ENCODE measurements at regions of chr11 and their contacts with region 1.

Region 1: GRCh38 chr11:61384271-61385242 is 7.8 kb upstream of the TMEM216 start:
- DNase-seq: no peak
- ATAC-seq: peak; percentile 63
- H3K4me3 ChIP-seq: no peak overlapping the region
- H3K27ac ChIP-seq: no peak overlapping the region
- H3K4me1 ChIP-seq: no peaks in the 10 kb centered on the region
- H3K27me3 ChIP-seq: no peaks in the 10 kb centered on the region
- CTCF ChIP-seq: peak; percentile 24 to 55 (median 48); a peak in 5 of 6 replicates
- EP300 ChIP-seq: no peak
- POLR2A ChIP-seq: no peak
- RAD21 ChIP-seq: peak; percentile 60

Region 2: DNA sequence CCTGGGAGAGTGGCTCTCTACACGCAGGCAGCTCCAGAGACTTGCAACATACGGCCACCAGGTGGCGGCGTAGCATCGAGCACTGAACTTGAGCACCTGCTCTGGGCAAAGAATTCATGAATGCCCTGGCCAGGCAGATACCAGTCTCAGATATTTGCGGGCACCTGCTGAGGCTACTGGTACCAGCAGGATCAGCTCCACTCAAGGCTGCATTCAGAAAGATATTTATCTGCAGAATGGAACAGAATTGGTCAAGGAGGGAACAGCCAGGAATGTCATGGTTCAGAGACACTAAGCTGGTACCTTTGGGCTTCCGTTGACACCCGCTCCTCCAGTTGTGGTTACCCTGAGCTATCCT is 553.4 kb before region 1 on chr11:
- CTCF ChIA-PET with region 1: interaction called, 11 read pairs
- POLR2A ChIA-PET with region 1: no interaction called
- RAD21 ChIA-PET with region 1: interaction called, 8 read pairs
- SMC1A ChIA-PET with region 1: interaction called, 7 read pairs
- in situ Hi-C with region 1: no loop called
- intact Hi-C with region 1: no loop called
- DNase-seq: peak; percentile 26
- ATAC-seq: peak; percentile 98
- H3K4me3 ChIP-seq: no peak overlapping the region
- H3K27ac ChIP-seq: no peak overlapping the region
- H3K4me1 ChIP-seq: no peaks in the 10 kb centered on the region; the same call in 1 of the 2 replicates
- H3K27me3 ChIP-seq: no peaks in the 10 kb centered on the region; a peak in 2 of 4 replicates
- CTCF ChIP-seq: peak; percentile 94 to 95 (median 95)
- EP300 ChIP-seq: no peak
- POLR2A ChIP-seq: no peak
- RAD21 ChIP-seq: peak; percentile 96

Region 3: GRCh38 chr11:61294717-61295595 is 89.6 kb before region 1 on chr11 and contains the start of gene VWCE:
- CTCF ChIA-PET with region 1: interaction called, 18 read pairs
- POLR2A ChIA-PET with region 1: no interaction called
- RAD21 ChIA-PET with region 1: interaction called, 5 read pairs
- SMC1A ChIA-PET with region 1: interaction called, 9 read pairs
- in situ Hi-C with region 1: no loop called
- intact Hi-C with region 1: no loop called
- DNase-seq: no peak
- ATAC-seq: peak; percentile 90
- H3K4me3 ChIP-seq: peak within 1 kb of the TSS; percentile 70
- H3K27ac ChIP-seq: peak within 1 kb of the TSS; percentile 67
- H3K4me1 ChIP-seq: peaks cover 28% of the 10 kb centered on the region
- H3K27me3 ChIP-seq: no peaks in the 10 kb centered on the region
- CTCF ChIP-seq: peak; percentile 44 to 57 (median 45); a peak in 5 of 6 replicates
- EP300 ChIP-seq: no peak
- POLR2A ChIP-seq: peak; percentile 68
- RAD21 ChIP-seq: peak; percentile 52
- polyA plus RNA-seq, gene VWCE: 0.10 to 0.29 TPM

Region 4: GRCh38 chr11:61332797-61333549 is 51.6 kb before region 1 on chr11 and contains the starts of genes DDB1 and TKFC:
- CTCF ChIA-PET with region 1: interaction called, 729 read pairs
- POLR2A ChIA-PET with region 1: interaction called, 86 read pairs
- RAD21 ChIA-PET with region 1: interaction called, 424 read pairs
- SMC1A ChIA-PET with region 1: interaction called, 414 read pairs
- in situ Hi-C with region 1: loop called (anchors 5 kb)
- intact Hi-C with region 1: loop called (anchors 1 kb)
- DNase-seq: peak; percentile 64
- ATAC-seq: peak; percentile 94
- H3K4me3 ChIP-seq: peak within 1 kb of the TSS; percentile 90
- H3K27ac ChIP-seq: peak within 1 kb of the TSS; percentile 92
- H3K4me1 ChIP-seq: peaks cover 20% of the 10 kb centered on the region
- H3K27me3 ChIP-seq: no peaks in the 10 kb centered on the region
- CTCF ChIP-seq: no peak
- EP300 ChIP-seq: no peak
- POLR2A ChIP-seq: peak; percentile 98
- RAD21 ChIP-seq: no peak
- polyA plus RNA-seq, gene DDB1: 136 to 211 TPM
- polyA plus RNA-seq, gene TKFC: 2.4 to 5.5 TPM

Region 5: DNA sequence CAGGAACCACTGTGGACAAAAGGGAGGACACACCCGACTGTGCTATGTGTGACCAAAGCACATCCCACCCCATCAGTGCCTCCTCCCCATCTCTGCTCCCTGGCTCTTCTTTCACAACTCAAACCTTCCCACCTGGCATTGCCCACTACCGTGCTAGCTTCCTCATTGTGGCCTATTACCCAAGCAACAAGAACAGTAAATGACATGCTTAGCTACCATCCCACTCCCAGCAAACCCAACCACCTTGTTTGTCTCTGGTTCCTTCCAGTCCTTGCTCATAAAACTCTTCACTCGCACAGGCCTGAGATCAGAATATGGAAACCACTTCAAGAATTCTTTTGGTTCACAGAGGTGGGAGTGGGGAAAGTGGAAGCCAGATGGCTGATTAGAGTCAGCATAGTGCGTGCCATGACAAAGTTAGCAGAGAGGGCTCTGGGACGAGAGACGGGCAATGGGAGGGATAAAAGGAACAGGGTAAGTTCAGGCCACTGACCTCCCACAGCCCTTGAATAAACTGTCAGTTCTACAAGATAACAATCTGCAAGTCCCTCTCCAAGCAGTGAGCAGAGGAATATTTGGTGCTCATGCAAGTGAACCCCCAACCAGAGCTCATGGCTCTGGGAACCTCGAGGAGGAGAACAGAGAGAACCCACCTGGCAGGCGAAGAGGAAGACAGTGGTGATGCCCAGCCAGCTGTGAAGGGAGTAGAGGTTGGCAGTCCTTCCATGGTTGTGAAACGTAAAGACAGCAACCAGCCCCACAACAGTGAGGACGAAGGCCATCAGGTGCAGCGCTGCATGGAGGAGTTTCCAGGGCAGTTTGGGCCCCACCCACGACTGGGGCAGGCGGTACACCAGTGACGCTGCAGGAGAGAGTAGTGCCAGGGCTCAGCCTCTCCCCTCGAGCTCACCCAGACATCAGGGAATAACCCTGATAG is 31.2 kb before region 1 on chr11:
- CTCF ChIA-PET with region 1: interaction called, 309 read pairs
- POLR2A ChIA-PET with region 1: interaction called, 7 read pairs
- RAD21 ChIA-PET with region 1: interaction called, 42 read pairs
- SMC1A ChIA-PET with region 1: interaction called, 122 read pairs
- in situ Hi-C with region 1: no loop called
- intact Hi-C with region 1: loop called (anchors 2 kb)
- DNase-seq: no peak
- ATAC-seq: no peak
- H3K4me3 ChIP-seq: no peak overlapping the region
- H3K27ac ChIP-seq: no peak overlapping the region
- H3K4me1 ChIP-seq: peaks cover 22% of the 10 kb centered on the region
- H3K27me3 ChIP-seq: no peaks in the 10 kb centered on the region
- CTCF ChIP-seq: no peak
- EP300 ChIP-seq: no peak
- POLR2A ChIP-seq: no peak
- RAD21 ChIP-seq: no peak

Region 6: DNA sequence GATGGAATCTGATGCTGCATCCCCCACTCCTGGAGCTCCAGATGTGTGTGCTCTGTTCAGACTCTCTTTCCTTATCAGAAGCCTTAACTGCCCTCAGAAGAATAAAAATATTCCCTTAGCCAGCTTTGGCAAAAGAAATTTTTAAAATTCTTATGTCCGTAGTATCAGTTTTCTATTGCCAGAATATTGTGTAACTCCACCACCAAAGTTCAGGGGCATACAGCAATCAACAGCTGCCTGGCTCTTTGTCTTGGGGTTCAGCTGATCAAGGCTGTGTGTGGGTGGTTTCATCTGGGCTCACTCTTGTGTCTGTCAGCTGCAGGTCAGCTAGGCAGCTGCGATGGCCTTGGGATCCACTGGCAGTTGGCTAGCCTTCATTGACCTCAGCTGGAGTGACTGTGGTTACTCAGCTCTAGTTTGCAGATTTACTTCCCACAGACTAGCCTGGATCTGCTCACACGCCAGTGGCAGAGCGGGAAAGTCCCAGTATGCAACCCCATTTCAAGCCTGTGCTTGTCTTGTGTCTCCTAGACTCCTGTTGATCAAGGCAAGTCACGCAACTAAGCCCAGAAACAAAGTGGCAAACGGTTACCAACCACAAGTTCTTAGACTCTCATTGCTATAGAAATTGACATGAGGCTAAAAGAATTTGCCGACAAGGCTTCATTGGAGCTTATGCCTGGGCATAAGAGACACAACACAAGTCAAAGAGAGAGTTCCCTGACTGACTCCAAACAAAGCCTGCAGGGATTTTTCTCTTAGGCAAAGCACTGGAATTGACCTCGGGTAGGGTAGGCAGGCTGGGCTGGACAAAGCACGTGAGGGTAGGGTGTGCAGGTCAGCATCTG is 15.0 kb before region 1 on chr11:
- CTCF ChIA-PET with region 1: interaction called, 309 read pairs
- POLR2A ChIA-PET with region 1: interaction called, 6 read pairs
- RAD21 ChIA-PET with region 1: interaction called, 31 read pairs
- SMC1A ChIA-PET with region 1: interaction called, 122 read pairs
- in situ Hi-C with region 1: no loop called
- intact Hi-C with region 1: no loop called
- DNase-seq: peak; percentile 77
- ATAC-seq: peak; percentile 86
- H3K4me3 ChIP-seq: no peak overlapping the region
- H3K27ac ChIP-seq: peak overlapping the region; percentile 68
- H3K4me1 ChIP-seq: peaks cover 8% of the 10 kb centered on the region
- H3K27me3 ChIP-seq: no peaks in the 10 kb centered on the region
- CTCF ChIP-seq: no peak
- EP300 ChIP-seq: peak; percentile 92 to 93
- POLR2A ChIP-seq: peak; percentile 43; the same call in 1 of the 2 replicates
- RAD21 ChIP-seq: no peak

Region 7: GRCh38 chr11:61429691-61430582 is 45.4 kb after region 1 on chr11 and contains the starts of genes CPSF7 and SDHAF2:
- CTCF ChIA-PET with region 1: interaction called, 27 read pairs
- POLR2A ChIA-PET with region 1: interaction called, 4 read pairs
- RAD21 ChIA-PET with region 1: interaction called, 4 read pairs
- SMC1A ChIA-PET with region 1: interaction called, 8 read pairs
- in situ Hi-C with region 1: no loop called
- intact Hi-C with region 1: no loop called
- DNase-seq: peak; percentile 69
- ATAC-seq: peak; percentile 93
- H3K4me3 ChIP-seq: peak within 1 kb of the TSS; percentile 87
- H3K27ac ChIP-seq: peak within 1 kb of the TSS; percentile 99
- H3K4me1 ChIP-seq: peaks cover 7% of the 10 kb centered on the region
- H3K27me3 ChIP-seq: no peaks in the 10 kb centered on the region
- CTCF ChIP-seq: no peak
- EP300 ChIP-seq: no peak
- POLR2A ChIP-seq: peak; percentile 93
- RAD21 ChIP-seq: no peak
- polyA plus RNA-seq, gene CPSF7: 14.9 to 21.9 TPM
- polyA plus RNA-seq, gene SDHAF2: 155 to 160 TPM

Region 8: DNA sequence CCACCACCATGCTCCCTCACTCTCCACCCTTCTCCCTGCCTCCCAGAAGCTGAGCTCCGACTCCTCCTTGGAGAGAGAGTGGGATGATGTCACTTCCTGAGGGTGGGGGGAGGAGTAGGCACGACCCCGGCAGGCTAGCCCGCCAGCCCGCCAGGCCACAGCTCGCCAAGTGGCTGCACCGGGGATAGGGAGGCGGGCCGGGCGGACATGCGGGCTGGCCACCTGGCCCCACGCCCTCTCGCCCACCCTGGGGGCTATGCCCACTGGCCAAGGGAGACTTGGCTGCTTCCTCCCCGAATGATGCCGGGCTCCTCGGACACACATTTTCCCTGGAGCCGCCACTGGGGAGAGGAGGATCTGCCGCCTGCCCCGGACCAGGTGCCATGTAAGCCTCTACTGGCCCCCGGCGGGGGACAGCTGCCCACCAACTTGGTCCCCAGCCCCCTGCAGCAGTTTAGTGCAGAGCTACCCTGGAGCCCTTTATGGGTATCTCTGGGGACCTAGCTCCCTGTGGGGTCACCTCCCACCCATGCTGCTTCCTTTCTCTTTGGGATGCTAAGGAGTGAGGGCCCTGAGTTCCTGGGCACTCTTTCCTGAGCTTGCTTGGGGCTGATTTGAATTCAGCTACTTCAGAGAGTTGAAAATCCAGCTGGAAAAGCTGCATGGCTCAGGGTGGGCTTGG is 334.2 kb after region 1 on chr11:
- CTCF ChIA-PET with region 1: no interaction called
- POLR2A ChIA-PET with region 1: no interaction called
- RAD21 ChIA-PET with region 1: no interaction called
- SMC1A ChIA-PET with region 1: no interaction called
- in situ Hi-C with region 1: no loop called
- intact Hi-C with region 1: no loop called
- DNase-seq: no peak
- ATAC-seq: no peak
- H3K4me3 ChIP-seq: no peak overlapping the region
- H3K27ac ChIP-seq: no peak overlapping the region
- H3K4me1 ChIP-seq: no peaks in the 10 kb centered on the region
- H3K27me3 ChIP-seq: peaks cover 0 to 3% of the 10 kb centered on the region in 2 experiments; a peak in 3 of 4 replicates
- CTCF ChIP-seq: no peak
- EP300 ChIP-seq: no peak
- POLR2A ChIP-seq: no peak
- RAD21 ChIP-seq: no peak

Region 9: GRCh38 chr11:61963282-61964057 is 578.9 kb after region 1 on chr11:
- CTCF ChIA-PET with region 1: no interaction called
- POLR2A ChIA-PET with region 1: no interaction called
- RAD21 ChIA-PET with region 1: no interaction called
- SMC1A ChIA-PET with region 1: no interaction called
- in situ Hi-C with region 1: no loop called
- intact Hi-C with region 1: no loop called
- DNase-seq: peak; percentile 53
- ATAC-seq: peak; percentile 20
- H3K4me3 ChIP-seq: no peak overlapping the region
- H3K27ac ChIP-seq: peak overlapping the region; percentile 75
- H3K4me1 ChIP-seq: peaks cover 23% of the 10 kb centered on the region
- H3K27me3 ChIP-seq: no peaks in the 10 kb centered on the region
- CTCF ChIP-seq: no peak
- EP300 ChIP-seq: no peak
- POLR2A ChIP-seq: peak; percentile 13; the same call in 1 of the 2 replicates
- RAD21 ChIP-seq: no peak